CD4-positive, alpha-beta T cell (primary cell): ENCODE measurements at regions of chr1 and their contacts with region 1.

Region 1: GRCh38 chr1:24415334-24415909 is at the start of gene NIPAL3:
- DNase-seq: peak; percentile 92 to 99 (median 96)
- ATAC-seq: peak; percentile 94
- H3K4me3 ChIP-seq: peak within 1 kb of the TSS; percentile 82
- H3K4me3 Mint-ChIP-seq: peak within 1 kb of the TSS; percentile 97
- H3K27ac ChIP-seq: peak within 1 kb of the TSS; percentile 44 to 50
- H3K27ac Mint-ChIP-seq: peak within 1 kb of the TSS; percentile 91
- H3K4me1 ChIP-seq: peaks cover 61% of the 10 kb centered on the region
- H3K4me1 Mint-ChIP-seq: peaks cover 79% of the 10 kb centered on the region
- H3K27me3 ChIP-seq: no peaks in the 10 kb centered on the region
- H3K27me3 Mint-ChIP-seq: no peaks in the 10 kb centered on the region
- CTCF ChIP-seq: peak; percentile 87
- total RNA-seq, gene NIPAL3: 26.3 to 29.8 TPM

Region 2: GRCh38 chr1:24403806-24404205 is 11.6 kb before region 1 on chr1:
- CTCF ChIA-PET with region 1: interaction called, 12 read pairs
- POLR2A ChIA-PET with region 1: interaction called, 5 read pairs
- intact Hi-C with region 1: no loop called
- DNase-seq: no peak
- ATAC-seq: no peak
- H3K4me3 ChIP-seq: no peak overlapping the region
- H3K4me3 Mint-ChIP-seq: no peak overlapping the region
- H3K27ac ChIP-seq: no peak overlapping the region
- H3K27ac Mint-ChIP-seq: no peak overlapping the region
- H3K4me1 ChIP-seq: no peaks in the 10 kb centered on the region
- H3K4me1 Mint-ChIP-seq: no peaks in the 10 kb centered on the region
- H3K27me3 ChIP-seq: no peaks in the 10 kb centered on the region
- H3K27me3 Mint-ChIP-seq: no peaks in the 10 kb centered on the region
- CTCF ChIP-seq: no peak

Region 3: DNA sequence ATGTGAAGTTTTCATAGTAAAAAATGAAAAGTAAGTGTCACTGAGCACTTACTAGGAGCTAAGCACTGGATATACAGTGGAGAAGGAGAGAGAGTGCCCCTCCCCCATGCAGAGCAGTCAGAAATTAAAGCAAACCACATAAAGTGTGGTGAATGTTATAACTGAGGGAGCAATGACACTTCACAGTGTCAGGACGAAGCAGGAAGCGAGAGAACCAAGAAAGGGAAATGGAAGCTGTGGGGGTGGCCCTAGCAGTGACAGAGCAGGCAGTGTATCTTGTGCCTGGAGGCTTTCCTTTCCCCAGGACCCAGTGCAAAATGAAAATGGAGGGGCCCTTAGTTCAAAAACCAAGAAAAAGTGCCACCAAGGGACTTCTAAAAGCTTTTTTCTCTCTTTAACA is 65.7 kb after region 1 on chr1:
- CTCF ChIA-PET with region 1: interaction called, 16 read pairs
- POLR2A ChIA-PET with region 1: interaction called, 40 read pairs
- intact Hi-C with region 1: loop called (anchors 2 to 5 kb)
- DNase-seq: peak in 13 of 14 experiments; percentile 23 to 90 (median 53)
- ATAC-seq: peak; percentile 70
- H3K4me3 ChIP-seq: no peak overlapping the region
- H3K4me3 Mint-ChIP-seq: peak overlapping the region; percentile 90
- H3K27ac ChIP-seq: peak overlapping the region; percentile 25 to 81
- H3K27ac Mint-ChIP-seq: peak overlapping the region; percentile 98
- H3K4me1 ChIP-seq: peaks cover 63% of the 10 kb centered on the region
- H3K4me1 Mint-ChIP-seq: peaks cover 63% of the 10 kb centered on the region
- H3K27me3 ChIP-seq: no peaks in the 10 kb centered on the region
- H3K27me3 Mint-ChIP-seq: no peaks in the 10 kb centered on the region
- CTCF ChIP-seq: no peak

Region 4: DNA sequence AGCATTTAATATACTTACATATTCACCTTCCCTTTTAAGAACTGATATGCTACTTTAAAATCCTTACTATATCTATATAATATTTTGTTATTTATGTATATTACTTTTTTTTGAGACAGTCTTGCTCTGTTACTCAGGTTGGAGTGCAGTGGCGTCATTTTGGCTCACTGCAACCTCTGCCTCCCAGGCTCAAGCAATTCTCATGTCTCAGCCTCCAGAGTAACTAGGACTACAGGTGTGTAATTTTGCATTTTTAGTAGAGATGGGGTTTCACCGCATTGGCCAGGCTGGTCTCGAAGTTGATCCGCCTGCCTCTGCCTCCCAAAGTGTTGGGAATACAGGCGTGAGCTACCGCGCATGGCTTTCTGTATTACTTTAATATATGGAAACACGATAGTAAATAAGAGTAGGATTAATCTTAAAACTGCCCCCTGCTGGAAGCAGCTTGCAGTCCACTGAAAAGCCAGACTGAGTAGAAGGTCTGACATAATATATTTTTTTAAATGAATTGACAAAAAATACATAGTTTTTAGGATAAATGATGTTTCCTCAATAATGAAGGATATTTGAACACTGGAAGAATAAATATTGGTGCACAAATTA is 111.6 kb after region 1 on chr1:
- CTCF ChIA-PET with region 1: interaction called, 21 read pairs
- POLR2A ChIA-PET with region 1: interaction called, 23 read pairs
- intact Hi-C with region 1: loop called (anchors 2 to 5 kb)
- DNase-seq: peak in 13 of 14 experiments; percentile 22 to 75 (median 42)
- ATAC-seq: peak; percentile 78
- H3K4me3 ChIP-seq: no peak overlapping the region
- H3K4me3 Mint-ChIP-seq: peak overlapping the region; percentile 45
- H3K27ac ChIP-seq: no peak overlapping the region
- H3K27ac Mint-ChIP-seq: peak overlapping the region; percentile 64
- H3K4me1 ChIP-seq: peaks cover 49% of the 10 kb centered on the region
- H3K4me1 Mint-ChIP-seq: peaks cover 76% of the 10 kb centered on the region
- H3K27me3 ChIP-seq: no peaks in the 10 kb centered on the region
- H3K27me3 Mint-ChIP-seq: no peaks in the 10 kb centered on the region
- CTCF ChIP-seq: peak; percentile 78

Region 5: DNA sequence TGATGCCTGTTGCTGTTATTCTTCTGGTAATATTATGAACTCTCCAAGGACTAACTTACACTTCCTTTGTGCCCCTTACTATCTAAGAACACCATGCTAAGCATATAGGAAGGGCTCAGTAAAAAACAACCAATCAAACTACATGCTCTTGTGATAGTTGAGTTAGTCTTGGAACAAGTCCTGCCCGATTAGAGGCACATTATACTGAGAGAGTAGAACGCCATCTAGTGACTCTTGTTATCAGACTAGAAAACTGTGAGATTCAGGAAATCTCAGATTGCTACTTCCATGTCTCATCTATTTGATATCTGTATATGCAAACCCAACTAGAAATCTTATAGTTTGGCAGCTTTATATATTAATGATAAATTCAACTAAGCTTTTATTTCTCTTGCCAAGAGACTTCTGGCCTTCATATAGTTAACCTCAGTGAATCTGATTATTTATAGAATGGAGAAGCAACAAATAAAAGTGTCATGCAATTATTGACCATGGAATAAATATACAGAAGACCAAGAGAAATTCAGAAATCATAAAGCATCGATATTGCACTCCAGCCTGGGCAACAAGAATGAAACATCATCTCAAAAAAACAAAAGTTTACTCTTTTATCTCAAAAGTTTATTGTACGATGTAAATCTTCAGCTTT is 219.9 kb after region 1 on chr1:
- CTCF ChIA-PET with region 1: interaction called, 3 read pairs
- POLR2A ChIA-PET with region 1: no interaction called
- intact Hi-C with region 1: loop called in 1 of 2 experiments (anchors 5 kb)
- DNase-seq: peak in 3 of 14 experiments; percentile 69 to 75 (median 74)
- ATAC-seq: peak; percentile 89
- H3K4me3 ChIP-seq: no peak overlapping the region
- H3K4me3 Mint-ChIP-seq: no peak overlapping the region
- H3K27ac ChIP-seq: no peak overlapping the region
- H3K27ac Mint-ChIP-seq: no peak overlapping the region
- H3K4me1 ChIP-seq: no peaks in the 10 kb centered on the region
- H3K4me1 Mint-ChIP-seq: peaks cover 9% of the 10 kb centered on the region
- H3K27me3 ChIP-seq: peaks cover 0 to under 1% of the 10 kb centered on the region in 2 experiments
- H3K27me3 Mint-ChIP-seq: peaks cover 11% of the 10 kb centered on the region
- CTCF ChIP-seq: peak; percentile 76